ENCODE measurements at regions of chr11 and their contacts with region 1.

Region 1: GRCh38 chr11:72454791-72455190 is 20.5 kb upstream of the CLPB start:
- DNase-seq: no peak
- H3K4me3 Mint-ChIP-seq: no peak overlapping the region
- H3K27ac Mint-ChIP-seq: no peak overlapping the region
- H3K4me1 Mint-ChIP-seq: no peaks in the 10 kb centered on the region
- H3K27me3 Mint-ChIP-seq: peaks cover 13% of the 10 kb centered on the region

Region 2: GRCh38 chr11:72471005-72471898 is 16.5 kb after region 1 on chr11:
- CTCF ChIA-PET with region 1: interaction called, 15 read pairs
- POLR2A ChIA-PET with region 1: no interaction called
- DNase-seq: peak; percentile 70
- H3K4me3 Mint-ChIP-seq: no peak overlapping the region
- H3K27ac Mint-ChIP-seq: no peak overlapping the region
- H3K4me1 Mint-ChIP-seq: peaks cover 2% of the 10 kb centered on the region
- H3K27me3 Mint-ChIP-seq: peaks cover 42% of the 10 kb centered on the region

Region 3: DNA sequence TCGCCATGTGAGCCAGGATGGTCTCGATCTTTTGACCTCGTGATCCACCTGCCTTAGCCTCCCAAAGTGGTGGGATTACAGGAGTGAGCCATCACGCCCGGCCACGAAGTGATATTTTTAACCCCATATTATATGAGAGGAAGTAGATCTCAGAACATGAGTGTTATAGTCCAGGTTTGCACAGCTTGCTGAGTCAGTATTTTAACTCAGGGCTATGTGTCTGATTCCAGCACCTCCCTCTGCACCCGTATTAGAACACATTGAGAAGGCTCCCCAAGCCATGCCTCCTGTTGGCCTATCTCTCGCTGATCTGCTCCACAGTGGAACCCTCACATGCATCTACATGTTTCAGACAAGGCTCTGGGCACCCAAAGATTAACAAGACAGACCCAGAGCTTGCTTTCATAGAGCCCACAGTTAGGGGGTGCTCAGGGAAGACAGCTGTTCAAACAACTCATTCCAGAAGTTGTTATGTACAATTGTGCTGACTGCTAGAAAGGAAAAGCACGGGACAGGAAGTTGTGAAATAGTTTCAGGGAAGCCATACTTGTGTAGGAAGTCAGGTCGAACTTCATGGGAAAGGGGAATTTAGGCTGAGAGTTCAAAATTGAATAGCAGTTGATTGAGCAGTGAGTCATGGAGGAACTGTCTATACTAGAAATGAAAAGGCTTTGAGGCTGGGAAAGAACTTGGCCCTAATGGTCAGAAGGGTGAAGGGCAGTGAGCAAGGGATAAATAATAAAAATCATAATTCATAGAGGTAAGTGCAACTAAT is 28.8 kb after region 1 on chr11:
- CTCF ChIA-PET with region 1: no interaction called
- POLR2A ChIA-PET with region 1: no interaction called
- DNase-seq: no peak
- H3K4me3 Mint-ChIP-seq: no peak overlapping the region
- H3K27ac Mint-ChIP-seq: no peak overlapping the region
- H3K4me1 Mint-ChIP-seq: peaks cover 8% of the 10 kb centered on the region
- H3K27me3 Mint-ChIP-seq: peaks cover 15% of the 10 kb centered on the region

Region 4: GRCh38 chr11:72598906-72599305 is 144.1 kb after region 1 on chr11:
- CTCF ChIA-PET with region 1: no interaction called
- POLR2A ChIA-PET with region 1: no interaction called
- DNase-seq: no peak
- H3K4me3 Mint-ChIP-seq: no peak overlapping the region
- H3K27ac Mint-ChIP-seq: no peak overlapping the region
- H3K4me1 Mint-ChIP-seq: no peaks in the 10 kb centered on the region
- H3K27me3 Mint-ChIP-seq: peaks cover 11% of the 10 kb centered on the region